Caco-2 (cell line): ENCODE measurements at regions of chr1 and their contacts with region 1.

Region 1: DNA sequence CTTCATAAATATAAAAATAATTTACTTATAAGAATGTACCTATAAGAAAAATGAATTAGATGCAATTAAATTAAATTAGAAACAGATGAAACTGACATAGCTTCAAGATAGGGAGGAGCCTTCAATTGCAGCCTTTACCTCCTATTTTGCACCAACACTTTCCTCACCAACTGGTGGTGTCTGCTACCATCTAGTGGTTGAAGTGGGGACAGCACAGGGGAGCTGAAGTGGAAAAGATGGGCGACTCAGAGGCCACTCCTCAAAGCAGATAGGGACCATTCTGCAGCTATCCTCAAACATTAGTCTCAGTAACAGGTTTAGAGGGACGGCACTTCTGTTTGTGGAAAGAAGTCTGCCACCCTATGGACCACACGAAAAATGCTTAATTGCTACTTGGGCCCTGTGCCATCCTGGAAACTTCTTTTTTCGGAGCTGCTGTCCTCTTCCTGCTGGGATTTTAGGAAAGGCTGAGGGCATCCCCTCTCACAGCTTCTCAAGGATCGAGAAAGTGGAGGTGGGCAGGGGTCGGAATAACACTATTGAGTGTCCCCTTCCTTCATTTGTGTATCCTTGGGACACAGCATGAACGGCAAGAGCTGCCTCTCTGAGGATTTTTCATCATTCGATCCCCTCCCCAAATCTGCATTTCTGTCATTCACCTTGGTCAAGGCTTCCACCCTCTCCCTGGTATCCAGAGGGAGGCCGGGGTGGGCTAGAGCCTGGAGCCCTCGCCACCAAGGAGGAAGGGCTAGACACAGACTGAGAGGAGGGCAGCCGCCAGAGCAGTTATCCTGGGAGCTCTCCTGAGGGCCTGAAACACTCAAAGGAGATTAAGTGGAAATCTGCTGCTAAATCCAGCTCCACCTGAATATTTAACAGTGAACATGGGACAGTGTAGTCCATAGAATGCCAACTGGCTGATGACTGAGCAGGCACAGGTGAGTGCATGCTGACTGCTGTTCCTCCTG is 9.6 kb downstream of the PROK1 start:
- DNase-seq: peak; percentile 62 to 83
- H3K4me3 ChIP-seq: no peak overlapping the region
- H3K4me3 Mint-ChIP-seq: no peak overlapping the region
- H3K27ac Mint-ChIP-seq: no peak overlapping the region
- H3K4me1 ChIP-seq: peaks cover 25% of the 10 kb centered on the region
- H3K4me1 Mint-ChIP-seq: peaks cover 15% of the 10 kb centered on the region
- H3K27me3 ChIP-seq: no peaks in the 10 kb centered on the region
- H3K27me3 Mint-ChIP-seq: no peaks in the 10 kb centered on the region
- CTCF ChIP-seq: peak; percentile 83 to 85

Region 2: GRCh38 chr1:110209715-110210603 is 250.6 kb before region 1 on chr1 and contains the start of gene KCNC4:
- CTCF ChIA-PET with region 1: interaction called, 21 read pairs
- POLR2A ChIA-PET with region 1: no interaction called
- intact Hi-C with region 1: loop called (anchors 1 kb)
- DNase-seq: peak; percentile 74
- H3K4me3 ChIP-seq: peak within 1 kb of the TSS; percentile 51
- H3K4me3 Mint-ChIP-seq: peak within 1 kb of the TSS; percentile 85
- H3K27ac Mint-ChIP-seq: no peak within 1 kb of the TSS
- H3K4me1 ChIP-seq: peaks cover 4% of the 10 kb centered on the region; the same call in 1 of the 2 replicates
- H3K4me1 Mint-ChIP-seq: no peaks in the 10 kb centered on the region
- H3K27me3 ChIP-seq: no peaks in the 10 kb centered on the region
- H3K27me3 Mint-ChIP-seq: no peaks in the 10 kb centered on the region
- CTCF ChIP-seq: no peak
- total RNA-seq, gene KCNC4: 5.3 TPM in 2 replicates

Region 3: GRCh38 chr1:110338886-110339406 is 121.6 kb before region 1 on chr1 and contains the start of gene RBM15:
- CTCF ChIA-PET with region 1: interaction called, 11 read pairs
- POLR2A ChIA-PET with region 1: interaction called, 5 read pairs
- intact Hi-C with region 1: loop called (anchors 10 kb)
- DNase-seq: peak; percentile 95 to 97
- H3K4me3 ChIP-seq: peak within 1 kb of the TSS; percentile 92
- H3K4me3 Mint-ChIP-seq: no peak within 1 kb of the TSS
- H3K27ac Mint-ChIP-seq: no peak within 1 kb of the TSS
- H3K4me1 ChIP-seq: peaks cover 18% of the 10 kb centered on the region; the same call in 1 of the 2 replicates
- H3K4me1 Mint-ChIP-seq: peaks cover 15% of the 10 kb centered on the region
- H3K27me3 ChIP-seq: no peaks in the 10 kb centered on the region
- H3K27me3 Mint-ChIP-seq: no peaks in the 10 kb centered on the region
- CTCF ChIP-seq: no peak
- total RNA-seq, gene RBM15: 34.3 and 36.1 TPM in 2 replicates

Region 4: GRCh38 chr1:110433803-110434202 is 26.7 kb before region 1 on chr1:
- CTCF ChIA-PET with region 1: interaction called, 13 read pairs
- POLR2A ChIA-PET with region 1: no interaction called
- intact Hi-C with region 1: no loop called
- DNase-seq: peak; percentile 77 to 81
- H3K4me3 ChIP-seq: no peak overlapping the region
- H3K4me3 Mint-ChIP-seq: no peak overlapping the region
- H3K27ac Mint-ChIP-seq: no peak overlapping the region
- H3K4me1 ChIP-seq: peaks cover 27% of the 10 kb centered on the region
- H3K4me1 Mint-ChIP-seq: peaks cover 19% of the 10 kb centered on the region
- H3K27me3 ChIP-seq: no peaks in the 10 kb centered on the region
- H3K27me3 Mint-ChIP-seq: no peaks in the 10 kb centered on the region
- CTCF ChIP-seq: peak; percentile 40 to 46

Region 5: GRCh38 chr1:110495926-110496600 is 35.5 kb after region 1 on chr1:
- CTCF ChIA-PET with region 1: interaction called, 30 read pairs
- POLR2A ChIA-PET with region 1: no interaction called
- intact Hi-C with region 1: loop called (anchors 1 kb)
- DNase-seq: peak; percentile 64 to 80
- H3K4me3 ChIP-seq: no peak overlapping the region
- H3K4me3 Mint-ChIP-seq: no peak overlapping the region
- H3K27ac Mint-ChIP-seq: no peak overlapping the region
- H3K4me1 ChIP-seq: 0 out of 2 replicates have a peak, but pooled peaks cover 4% of the 10 kb centered on the region
- H3K4me1 Mint-ChIP-seq: no peaks in the 10 kb centered on the region
- H3K27me3 ChIP-seq: no peaks in the 10 kb centered on the region
- H3K27me3 Mint-ChIP-seq: no peaks in the 10 kb centered on the region
- CTCF ChIP-seq: peak; percentile 72 to 74